A673 (cell line): ENCODE measurements at regions of chr6 and their contacts with region 1.

Region 1: GRCh38 chr6:110859335-110859792 is 15.2 kb upstream of the AMD1 start:
- DNase-seq: no peak
- H3K4me3 ChIP-seq: no peak overlapping the region
- H3K27ac ChIP-seq: no peak overlapping the region
- H3K4me1 ChIP-seq: no peaks in the 10 kb centered on the region
- H3K27me3 ChIP-seq: no peaks in the 10 kb centered on the region
- CTCF ChIP-seq: no peak

Region 2: GRCh38 chr6:111033628-111034289 is 174.4 kb after region 1 on chr6:
- CTCF ChIA-PET with region 1: no interaction called
- POLR2A ChIA-PET with region 1: interaction called, 13 read pairs
- intact Hi-C with region 1: no loop called
- DNase-seq: no peak
- H3K4me3 ChIP-seq: no peak overlapping the region
- H3K27ac ChIP-seq: no peak overlapping the region
- H3K4me1 ChIP-seq: no peaks in the 10 kb centered on the region
- H3K27me3 ChIP-seq: no peaks in the 10 kb centered on the region
- CTCF ChIP-seq: no peak

Region 3: DNA sequence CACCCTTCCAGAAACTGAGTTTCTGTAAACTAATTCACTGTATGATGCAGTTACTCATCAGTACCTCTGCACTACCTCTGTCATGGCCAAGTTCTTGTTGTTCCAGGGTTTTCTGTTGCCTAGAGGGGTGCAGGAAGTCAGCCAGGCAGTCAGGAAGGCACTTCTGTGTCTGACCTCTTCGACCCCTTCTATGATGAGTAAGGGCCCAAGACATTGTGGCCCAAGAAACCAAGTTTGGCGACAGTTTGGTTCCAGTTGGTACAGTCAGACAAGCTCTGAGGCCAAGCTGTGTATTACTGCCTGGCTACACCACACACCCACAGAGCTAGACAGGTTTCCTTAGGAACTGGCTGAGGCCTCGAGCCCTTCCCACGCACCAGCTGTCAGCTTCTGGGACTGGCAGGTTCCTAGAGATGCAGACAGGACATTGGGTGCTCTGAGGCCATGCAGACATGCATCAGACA is 705.1 kb after region 1 on chr6:
- CTCF ChIA-PET with region 1: no interaction called
- POLR2A ChIA-PET with region 1: no interaction called
- intact Hi-C with region 1: no loop called
- DNase-seq: no peak
- H3K4me3 ChIP-seq: no peak overlapping the region
- H3K27ac ChIP-seq: peak overlapping the region; percentile 67
- H3K4me1 ChIP-seq: peaks cover 53% of the 10 kb centered on the region
- H3K27me3 ChIP-seq: no peaks in the 10 kb centered on the region
- CTCF ChIP-seq: no peak